Tibial artery (tissue), 4 donors: ENCODE measurements at regions of chr6 and their contacts with region 1.

Region 1: GRCh38 chr6:124961777-124962611 is at the start of gene RNF217:
- DNase-seq: peak; percentile 69 to 89
- H3K4me3 ChIP-seq: peak within 1 kb of the TSS; percentile 78 to 94
- H3K27ac ChIP-seq: peak within 1 kb of the TSS; percentile 98 to 99
- H3K4me1 ChIP-seq: peaks cover 0 to 45% (median 15%) of the 10 kb centered on the region in 4 donors
- H3K27me3 ChIP-seq: no peaks in the 10 kb centered on the region
- CTCF ChIP-seq: no peak

Region 2: GRCh38 chr6:125099211-125100073 is 137.4 kb after region 1 on chr6:
- intact Hi-C with region 1: loop called (anchors 5 kb)
- DNase-seq: peak; percentile 48 to 85
- H3K4me3 ChIP-seq: peak overlapping the region; percentile 63 to 64
- H3K27ac ChIP-seq: peak overlapping the region; percentile 73 to 79
- H3K4me1 ChIP-seq: peaks cover 0 to 49% (median 20%) of the 10 kb centered on the region in 4 donors
- H3K27me3 ChIP-seq: no peaks in the 10 kb centered on the region
- CTCF ChIP-seq: no peak